ENCODE measurements at regions of chr7 and their contacts with region 1.

Region 1: GRCh38 chr7:14761510-14762296 is 140.8 kb downstream of the DGKB start:
- DNase-seq: peak; percentile 77 to 91 (median 79)
- ATAC-seq: peak; percentile 95 to 100 (median 100)
- H3K4me3 ChIP-seq: no peak overlapping the region
- H3K27ac ChIP-seq: peak overlapping the region in 11 of 12 donors; percentile 11 to 74 (median 57)
- H3K4me1 ChIP-seq: peaks cover 0 to 21% (median 9%) of the 10 kb centered on the region in 12 donors
- H3K27me3 ChIP-seq: no peaks in the 10 kb centered on the region
- CTCF ChIP-seq: no peak
- POLR2A ChIP-seq: no peak

Region 2: GRCh38 chr7:14825912-14826311 is 64.2 kb after region 1 on chr7:
- intact Hi-C with region 1: loop called in 2 of 10 experiments (anchors 5 to 10 kb)
- DNase-seq: no peak
- ATAC-seq: no peak
- H3K4me3 ChIP-seq: peak overlapping the region in 1 of 12 donors; percentile 16
- H3K27ac ChIP-seq: no peak overlapping the region
- H3K4me1 ChIP-seq: peaks cover 0 to 6% (median 0%) of the 10 kb centered on the region in 12 donors
- H3K27me3 ChIP-seq: no peaks in the 10 kb centered on the region
- CTCF ChIP-seq: no peak
- POLR2A ChIP-seq: no peak

Region 3: DNA sequence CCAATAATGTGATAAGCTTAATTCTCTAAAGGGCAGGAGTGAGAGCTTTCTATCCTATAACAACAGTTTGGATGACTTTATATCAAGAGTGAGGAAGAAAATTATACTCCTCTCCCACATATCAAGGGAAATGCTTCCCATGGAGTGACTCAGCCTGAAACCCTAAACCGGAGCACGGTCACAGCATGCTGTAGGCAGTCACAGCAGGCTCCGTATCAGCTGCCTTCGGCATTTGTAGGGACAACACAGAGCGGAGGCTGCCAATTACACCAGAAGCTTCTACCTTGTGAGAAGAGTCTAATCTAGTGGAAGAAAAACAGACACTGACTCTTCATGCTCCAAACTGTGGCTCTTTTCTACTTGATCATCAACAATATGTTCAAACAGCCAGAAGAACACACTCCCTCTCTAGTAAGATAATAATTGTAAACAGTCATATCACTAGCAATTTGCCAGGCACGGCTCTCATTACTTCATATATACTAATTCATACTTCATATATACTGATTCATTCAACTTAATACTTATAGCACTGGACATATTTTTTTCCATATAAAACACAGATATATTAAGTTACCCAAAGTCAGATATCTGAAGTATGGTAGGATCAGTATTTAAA is 75.0 kb after region 1 on chr7:
- intact Hi-C with region 1: loop called in 1 of 10 experiments (anchors 10 kb)
- DNase-seq: peak; percentile 48 to 70 (median 55)
- ATAC-seq: peak; percentile 83 to 94 (median 92)
- H3K4me3 ChIP-seq: no peak overlapping the region
- H3K27ac ChIP-seq: peak overlapping the region in 11 of 12 donors; percentile 45 to 85 (median 75)
- H3K4me1 ChIP-seq: peaks cover 0 to 32% (median 16%) of the 10 kb centered on the region in 12 donors
- H3K27me3 ChIP-seq: no peaks in the 10 kb centered on the region
- CTCF ChIP-seq: no peak
- POLR2A ChIP-seq: no peak

Region 4: GRCh38 chr7:14911077-14911476 is 149.4 kb after region 1 on chr7:
- intact Hi-C with region 1: loop called in 1 of 10 experiments (anchors 10 kb)
- DNase-seq: no peak
- ATAC-seq: no peak
- H3K4me3 ChIP-seq: no peak overlapping the region
- H3K27ac ChIP-seq: no peak overlapping the region
- H3K4me1 ChIP-seq: no peaks in the 10 kb centered on the region
- H3K27me3 ChIP-seq: no peaks in the 10 kb centered on the region
- CTCF ChIP-seq: no peak
- POLR2A ChIP-seq: no peak

Region 5: DNA sequence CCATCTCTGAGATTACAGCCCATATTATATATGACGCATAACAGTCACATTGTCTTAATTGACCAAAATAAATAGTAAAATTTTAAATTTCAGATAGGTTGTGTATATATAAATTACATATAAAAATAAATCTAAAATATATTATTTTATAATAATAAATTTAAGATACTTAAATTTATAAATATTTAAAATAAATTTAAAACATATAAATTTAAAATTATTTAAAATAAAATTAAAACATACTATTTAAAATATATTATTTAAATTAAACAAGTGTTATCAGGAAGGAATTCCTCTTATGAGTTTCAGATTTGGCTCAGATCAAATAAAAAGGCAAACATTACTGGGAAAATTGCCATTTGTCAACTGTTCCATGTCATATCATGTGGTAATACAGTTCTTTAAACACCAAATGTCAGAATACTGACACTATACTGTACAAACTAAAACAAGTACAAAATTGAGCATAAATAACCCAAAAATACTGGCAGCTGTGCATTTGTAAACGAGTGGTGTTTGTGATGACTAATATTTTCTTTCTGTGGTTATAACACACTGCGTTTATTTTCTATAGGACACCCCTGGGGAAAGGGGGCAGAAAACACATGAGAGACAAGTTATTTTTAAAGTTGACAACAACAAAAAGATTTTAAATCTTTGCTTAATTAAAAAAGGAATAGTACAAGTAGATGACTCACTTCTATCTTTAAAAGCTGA is 212.2 kb after region 1 on chr7:
- intact Hi-C with region 1: no loop called
- DNase-seq: no peak
- ATAC-seq: no peak
- H3K4me3 ChIP-seq: no peak overlapping the region
- H3K27ac ChIP-seq: no peak overlapping the region
- H3K4me1 ChIP-seq: peaks cover 0 to 11% (median 0%) of the 10 kb centered on the region in 12 donors
- H3K27me3 ChIP-seq: no peaks in the 10 kb centered on the region
- CTCF ChIP-seq: no peak
- POLR2A ChIP-seq: no peak

Measured in heart left ventricle (tissue), 16 donors.